ENCODE measurements at regions of chr2 and their contacts with region 1.

Region 1: DNA sequence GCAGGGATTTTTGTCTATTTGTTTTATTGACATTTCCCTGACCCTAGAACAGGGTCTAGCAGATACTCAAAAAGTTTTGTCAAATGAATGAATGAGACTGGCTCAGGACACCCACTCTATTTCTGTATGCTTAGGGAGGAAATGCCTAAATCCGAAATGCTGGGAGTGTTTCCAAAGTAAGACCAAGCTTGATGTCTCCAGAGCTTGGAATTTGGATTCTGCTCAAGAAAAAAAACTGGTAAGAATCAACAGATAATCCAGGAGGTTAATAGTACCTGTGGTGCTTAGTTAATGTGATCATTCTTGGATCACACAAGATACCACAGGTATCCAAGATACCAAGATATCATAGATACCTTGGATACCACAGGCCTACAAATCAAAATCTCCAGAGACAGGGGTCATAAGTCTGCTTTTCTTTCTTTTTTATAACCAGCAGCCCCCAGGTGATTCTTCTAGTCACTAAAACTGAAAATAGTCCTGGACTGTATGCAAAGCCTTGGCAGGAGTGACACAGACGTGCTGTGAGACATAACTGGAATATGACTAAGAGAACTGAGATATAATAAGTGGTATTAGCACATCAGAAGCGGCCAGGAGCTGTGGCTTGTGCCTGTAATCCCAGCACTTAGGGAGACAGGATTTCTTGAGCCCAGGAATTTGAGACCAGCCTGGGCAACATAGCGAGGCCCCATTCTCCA is 39.9 kb upstream of the SP3 start:
- DNase-seq: peak in 1 of 2 donors; percentile 87
- H3K4me3 ChIP-seq: no peak overlapping the region
- H3K27ac ChIP-seq: peak overlapping the region; percentile 76 to 84
- H3K4me1 ChIP-seq: peaks cover 0 to 27% of the 10 kb centered on the region in 2 donors
- H3K27me3 ChIP-seq: no peaks in the 10 kb centered on the region
- CTCF ChIP-seq: no peak

Region 2: DNA sequence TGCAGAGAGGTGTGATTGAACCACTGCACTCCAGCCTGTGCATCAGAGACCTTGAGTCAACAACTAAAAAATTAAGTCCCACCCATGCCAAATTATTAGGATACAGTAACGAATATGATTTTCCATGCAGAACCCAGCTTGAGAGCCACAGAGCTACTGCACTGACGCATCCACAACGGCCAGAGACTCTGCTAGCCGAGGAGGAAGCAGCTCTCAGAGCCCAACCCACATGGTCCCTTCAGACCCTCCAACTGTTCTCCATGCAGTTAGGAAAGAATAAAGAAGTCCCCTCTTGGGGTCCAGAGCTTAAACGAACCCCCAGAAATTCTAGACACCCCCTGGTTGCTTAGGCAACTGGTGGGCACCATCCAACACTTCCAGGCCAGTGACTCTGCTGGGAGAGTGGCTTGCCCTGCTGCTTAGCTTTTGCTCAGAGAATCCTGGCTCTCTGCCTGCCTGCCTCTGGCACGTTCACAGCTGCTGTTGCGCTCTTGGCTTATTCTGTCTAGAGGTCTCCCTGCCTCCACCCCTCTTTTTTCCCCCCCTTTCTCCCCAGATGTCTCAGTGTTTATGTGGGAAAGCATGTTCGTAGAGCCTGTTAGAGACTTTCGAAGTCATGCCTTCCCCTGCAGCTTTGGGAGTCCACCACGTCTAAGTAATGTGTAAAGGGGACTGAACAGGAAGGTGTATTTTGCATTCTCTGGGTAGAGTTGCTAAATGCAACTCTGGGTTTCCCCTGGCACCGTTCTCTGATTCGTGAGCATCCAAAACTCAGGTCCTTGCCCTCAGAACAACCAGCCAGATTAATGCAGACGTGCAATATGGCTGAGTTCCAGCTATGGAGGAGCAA is 13.9 kb before region 1 on chr2:
- intact Hi-C with region 1: loop called (anchors 2 kb)
- DNase-seq: peak; percentile 25 to 92
- H3K4me3 ChIP-seq: peak overlapping the region; percentile 27 to 28
- H3K27ac ChIP-seq: peak overlapping the region; percentile 76 to 83
- H3K4me1 ChIP-seq: peaks cover 18 to 59% of the 10 kb centered on the region in 2 donors
- H3K27me3 ChIP-seq: no peaks in the 10 kb centered on the region
- CTCF ChIP-seq: no peak